IMR-90 (cell line): ENCODE measurements at regions of chr22 and their contacts with region 1.

Region 1: GRCh38 chr22:17638432-17639246 is at the start of gene BCL2L13:
- DNase-seq: peak; percentile 90
- ATAC-seq: peak; percentile 94
- H3K4me3 ChIP-seq: peak within 1 kb of the TSS; percentile 69
- H3K27ac ChIP-seq: peak within 1 kb of the TSS; percentile 94
- H3K4me1 ChIP-seq: peaks cover 2% of the 10 kb centered on the region
- H3K27me3 ChIP-seq: no peaks in the 10 kb centered on the region
- CTCF ChIP-seq: 0 out of 2 replicates have a peak, but pooled peaks have one; percentile 1
- POLR2A ChIP-seq: peak; percentile 95
- RAD21 ChIP-seq: no peak
- total RNA-seq, gene BCL2L13: 77.5 and 86.7 TPM in 2 replicates

Region 2: GRCh38 chr22:17339095-17339693 is 299.4 kb before region 1 on chr22:
- CTCF ChIA-PET with region 1: no interaction called
- POLR2A ChIA-PET with region 1: no interaction called
- dilution Hi-C with region 1: no loop called
- in situ Hi-C with region 1: no loop called
- intact Hi-C with region 1: no loop called
- DNase-seq: no peak
- ATAC-seq: no peak
- H3K4me3 ChIP-seq: no peak overlapping the region
- H3K27ac ChIP-seq: no peak overlapping the region
- H3K4me1 ChIP-seq: no peaks in the 10 kb centered on the region
- H3K27me3 ChIP-seq: peaks cover 2% of the 10 kb centered on the region; the same call in 1 of the 2 replicates
- CTCF ChIP-seq: no peak
- POLR2A ChIP-seq: no peak
- RAD21 ChIP-seq: no peak

Region 3: GRCh38 chr22:17562906-17563870 is 75.5 kb before region 1 on chr22 and contains the start of gene SLC25A18:
- CTCF ChIA-PET with region 1: interaction called, 3 read pairs
- POLR2A ChIA-PET with region 1: no interaction called
- dilution Hi-C with region 1: no loop called
- in situ Hi-C with region 1: no loop called
- intact Hi-C with region 1: loop called (anchors 2 kb)
- DNase-seq: no peak
- ATAC-seq: no peak
- H3K4me3 ChIP-seq: no peak within 1 kb of the TSS
- H3K27ac ChIP-seq: no peak within 1 kb of the TSS
- H3K4me1 ChIP-seq: no peaks in the 10 kb centered on the region
- H3K27me3 ChIP-seq: peaks cover 5% of the 10 kb centered on the region
- CTCF ChIP-seq: no peak
- POLR2A ChIP-seq: no peak
- RAD21 ChIP-seq: no peak
- total RNA-seq, gene SLC25A18: under 0.01 TPM in 1 of 2 replicates, not detected in the other

Region 4: DNA sequence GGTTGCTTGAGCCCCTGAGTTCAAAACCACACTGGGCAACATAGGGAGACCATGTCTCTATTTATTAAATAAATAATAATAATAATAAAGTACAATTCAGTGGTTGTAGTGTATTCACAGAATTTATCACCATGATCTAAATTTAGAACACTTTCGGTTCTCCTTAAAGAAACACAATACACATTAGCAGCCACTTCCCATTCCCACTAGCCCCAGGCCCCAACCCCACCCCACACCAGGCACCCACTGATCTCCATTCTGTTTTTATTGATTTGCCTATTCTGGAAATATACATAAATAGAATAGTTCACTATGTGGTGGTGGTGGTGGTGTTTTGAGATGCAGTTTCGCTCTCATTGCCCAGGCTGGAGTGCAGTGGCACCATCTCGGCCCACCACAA is 45.6 kb after region 1 on chr22:
- CTCF ChIA-PET with region 1: no interaction called
- POLR2A ChIA-PET with region 1: no interaction called
- dilution Hi-C with region 1: no loop called
- in situ Hi-C with region 1: loop called (anchors 5 kb)
- intact Hi-C with region 1: no loop called
- DNase-seq: no peak
- ATAC-seq: no peak
- H3K4me3 ChIP-seq: no peak overlapping the region
- H3K27ac ChIP-seq: no peak overlapping the region
- H3K4me1 ChIP-seq: no peaks in the 10 kb centered on the region
- H3K27me3 ChIP-seq: no peaks in the 10 kb centered on the region
- CTCF ChIP-seq: no peak
- POLR2A ChIP-seq: no peak
- RAD21 ChIP-seq: no peak

Region 5: DNA sequence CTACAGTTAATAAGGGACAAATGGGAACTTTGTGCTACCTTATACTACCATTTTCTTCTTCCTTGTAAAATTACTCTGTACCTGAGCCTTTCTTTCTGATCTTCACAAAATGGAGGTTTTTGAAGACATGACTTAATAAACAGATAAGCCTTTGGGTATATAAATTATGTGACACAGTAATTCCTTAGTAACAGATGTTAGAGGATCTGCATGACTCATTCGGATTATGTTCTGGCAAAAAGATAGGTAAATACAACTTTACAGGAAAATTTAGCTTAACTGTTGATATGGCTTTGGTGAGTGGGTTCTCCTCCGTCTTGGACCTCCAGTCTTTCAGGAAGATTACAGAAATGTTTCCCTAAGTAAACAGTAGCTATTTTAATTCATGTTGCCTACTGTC is 73.8 kb after region 1 on chr22:
- CTCF ChIA-PET with region 1: no interaction called
- POLR2A ChIA-PET with region 1: no interaction called
- dilution Hi-C with region 1: no loop called
- in situ Hi-C with region 1: no loop called
- intact Hi-C with region 1: loop called (anchors 5 kb)
- DNase-seq: peak; percentile 77
- ATAC-seq: peak; percentile 42
- H3K4me3 ChIP-seq: no peak overlapping the region
- H3K27ac ChIP-seq: no peak overlapping the region
- H3K4me1 ChIP-seq: peaks cover 14% of the 10 kb centered on the region
- H3K27me3 ChIP-seq: no peaks in the 10 kb centered on the region
- CTCF ChIP-seq: no peak
- POLR2A ChIP-seq: no peak
- RAD21 ChIP-seq: no peak

Region 6: GRCh38 chr22:17726464-17727246 is 88.0 kb after region 1 on chr22:
- CTCF ChIA-PET with region 1: no interaction called
- POLR2A ChIA-PET with region 1: no interaction called
- dilution Hi-C with region 1: no loop called
- in situ Hi-C with region 1: no loop called
- intact Hi-C with region 1: loop called (anchors 2 kb)
- DNase-seq: peak; percentile 72
- ATAC-seq: peak; percentile 86
- H3K4me3 ChIP-seq: no peak overlapping the region
- H3K27ac ChIP-seq: peak overlapping the region; percentile 95
- H3K4me1 ChIP-seq: peaks cover 29% of the 10 kb centered on the region
- H3K27me3 ChIP-seq: no peaks in the 10 kb centered on the region
- CTCF ChIP-seq: no peak
- POLR2A ChIP-seq: no peak
- RAD21 ChIP-seq: no peak; the same call in 1 of the 2 replicates

Region 7: DNA sequence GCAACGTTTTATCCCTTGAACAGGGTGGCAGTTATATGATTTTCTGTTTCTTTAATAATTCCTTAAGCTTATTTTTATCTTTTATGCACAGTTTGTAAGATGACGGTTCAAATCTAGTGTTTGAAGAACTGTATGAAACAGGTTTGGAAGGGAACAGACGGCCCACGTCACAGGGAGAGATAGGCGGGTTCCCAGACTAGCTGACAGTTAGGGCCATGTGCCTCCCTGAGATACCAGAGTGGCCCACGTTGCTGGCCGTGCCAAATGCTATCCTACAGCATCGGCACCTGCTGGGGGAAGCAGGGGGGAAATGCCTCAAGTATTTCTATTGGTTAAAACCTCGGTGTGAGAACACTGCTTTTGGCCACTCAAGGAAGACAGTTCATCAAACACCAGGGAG is 185.8 kb after region 1 on chr22:
- CTCF ChIA-PET with region 1: no interaction called
- POLR2A ChIA-PET with region 1: no interaction called
- dilution Hi-C with region 1: no loop called
- in situ Hi-C with region 1: no loop called
- intact Hi-C with region 1: no loop called
- DNase-seq: no peak
- ATAC-seq: no peak
- H3K4me3 ChIP-seq: no peak overlapping the region
- H3K27ac ChIP-seq: no peak overlapping the region
- H3K4me1 ChIP-seq: no peaks in the 10 kb centered on the region
- H3K27me3 ChIP-seq: no peaks in the 10 kb centered on the region
- CTCF ChIP-seq: no peak
- POLR2A ChIP-seq: no peak
- RAD21 ChIP-seq: no peak

Region 8: GRCh38 chr22:17888855-17889254 is 250.2 kb after region 1 on chr22:
- CTCF ChIA-PET with region 1: no interaction called
- POLR2A ChIA-PET with region 1: no interaction called
- dilution Hi-C with region 1: no loop called
- in situ Hi-C with region 1: no loop called
- intact Hi-C with region 1: no loop called
- DNase-seq: peak; percentile 47
- ATAC-seq: no peak
- H3K4me3 ChIP-seq: no peak overlapping the region
- H3K27ac ChIP-seq: no peak overlapping the region
- H3K4me1 ChIP-seq: peaks cover 7% of the 10 kb centered on the region
- H3K27me3 ChIP-seq: no peaks in the 10 kb centered on the region
- CTCF ChIP-seq: peak; percentile 41
- POLR2A ChIP-seq: no peak
- RAD21 ChIP-seq: peak; percentile 49